HepG2 (cell line): ENCODE measurements at regions of chr17 and their contacts with region 1.

Region 1: DNA sequence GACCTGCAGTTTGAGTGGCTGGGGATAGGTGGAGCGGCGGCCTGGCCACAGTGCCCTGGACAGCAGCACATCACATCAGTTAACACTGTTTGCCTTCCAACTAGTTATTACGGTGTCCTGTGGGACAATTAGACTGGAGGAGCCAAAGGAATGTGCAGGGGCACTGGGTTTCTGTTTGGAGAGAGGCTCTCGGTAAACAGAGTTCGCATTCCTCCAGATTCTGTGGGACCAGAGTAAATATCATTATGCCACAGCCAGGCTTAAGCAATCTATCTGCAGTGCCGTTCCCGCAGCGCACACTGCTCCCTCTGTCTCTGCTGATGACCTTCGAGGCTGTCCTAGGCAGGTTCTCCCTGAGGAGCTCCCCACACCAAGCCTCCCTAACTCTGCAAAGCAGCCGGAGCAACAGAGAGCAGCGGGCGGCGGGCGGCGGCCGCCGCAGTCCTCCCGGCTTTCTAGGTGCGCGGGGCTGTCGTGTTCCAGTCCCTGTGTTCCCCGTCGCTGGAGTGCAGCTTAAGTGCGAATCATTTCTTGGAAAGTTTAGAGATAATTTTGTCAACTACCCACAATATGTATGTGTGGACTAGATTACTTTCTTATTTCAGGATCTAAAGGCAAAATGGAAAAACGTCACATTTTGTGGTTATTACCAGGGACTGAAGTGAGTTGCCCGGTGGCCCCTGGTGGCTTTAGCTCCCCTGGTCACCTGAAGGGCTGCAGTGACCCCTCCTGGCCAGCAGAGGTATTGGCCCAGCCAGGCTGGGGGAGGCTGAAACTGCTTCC is 43.2 kb downstream of the PGS1 start:
- DNase-seq: peak; percentile 100
- ATAC-seq: peak; percentile 96
- H3K4me3 ChIP-seq: peak overlapping the region in 1 of 3 experiments; percentile 50; a peak in 2 of 6 replicates
- H3K27ac ChIP-seq: peak overlapping the region; percentile 56
- H3K4me1 ChIP-seq: peaks cover 29% of the 10 kb centered on the region
- H3K27me3 ChIP-seq: no peaks in the 10 kb centered on the region
- CTCF ChIP-seq: peak; percentile 97
- EP300 ChIP-seq: peak; percentile 98
- POLR2A ChIP-seq: peak in 1 of 2 experiments; percentile 28; a peak in 1 of 4 replicates
- RAD21 ChIP-seq: peak; percentile 97

Region 2: GRCh38 chr17:78250891-78251794 is 170.5 kb before region 1 on chr17:
- CTCF ChIA-PET with region 1: interaction called, 7 read pairs
- POLR2A ChIA-PET with region 1: interaction called, 5 read pairs
- in situ Hi-C with region 1: no loop called
- intact Hi-C with region 1: loop called (anchors 5 kb)
- DNase-seq: peak; percentile 79
- ATAC-seq: peak; percentile 80
- H3K4me3 ChIP-seq: peak overlapping the region in 1 of 3 experiments; percentile 3; a peak in 1 of 6 replicates
- H3K27ac ChIP-seq: no peak overlapping the region
- H3K4me1 ChIP-seq: peaks cover 71% of the 10 kb centered on the region
- H3K27me3 ChIP-seq: peaks cover 0 to 17% of the 10 kb centered on the region in 2 experiments; a peak in 4 of 5 replicates
- CTCF ChIP-seq: peak; percentile 99
- EP300 ChIP-seq: no peak
- POLR2A ChIP-seq: no peak
- RAD21 ChIP-seq: peak; percentile 100

Region 3: GRCh38 chr17:78289802-78290363 is 131.8 kb before region 1 on chr17:
- CTCF ChIA-PET with region 1: interaction called, 28 read pairs
- POLR2A ChIA-PET with region 1: interaction called, 3 read pairs
- in situ Hi-C with region 1: loop called (anchors 5 kb)
- intact Hi-C with region 1: loop called (anchors 1 kb)
- DNase-seq: peak; percentile 71
- ATAC-seq: peak; percentile 88
- H3K4me3 ChIP-seq: no peak overlapping the region
- H3K27ac ChIP-seq: no peak overlapping the region
- H3K4me1 ChIP-seq: peaks cover 20% of the 10 kb centered on the region
- H3K27me3 ChIP-seq: peaks cover 6 to 41% of the 10 kb centered on the region in 2 experiments
- CTCF ChIP-seq: peak; percentile 95
- EP300 ChIP-seq: no peak
- POLR2A ChIP-seq: no peak
- RAD21 ChIP-seq: peak; percentile 64; the same call in 1 of the 2 replicates

Region 4: DNA sequence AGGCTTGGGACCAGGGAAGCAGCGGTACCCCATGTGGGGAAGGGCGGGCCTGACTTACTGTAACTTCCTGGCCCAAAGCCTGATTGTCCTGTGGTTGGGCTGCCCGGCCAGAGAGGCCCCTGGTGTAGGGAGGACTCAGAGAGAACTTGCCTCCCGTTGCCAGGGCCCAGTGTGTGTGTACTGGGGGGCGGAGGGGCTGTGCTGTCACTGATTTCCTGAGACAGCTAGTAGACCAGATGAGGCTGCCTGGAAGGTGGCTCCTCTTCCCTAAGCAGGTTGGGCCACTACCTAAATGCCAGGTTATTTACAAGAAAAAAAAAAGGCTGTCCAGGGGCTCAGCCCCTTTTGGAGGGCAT is 78.5 kb before region 1 on chr17:
- CTCF ChIA-PET with region 1: no interaction called
- POLR2A ChIA-PET with region 1: no interaction called
- in situ Hi-C with region 1: no loop called
- intact Hi-C with region 1: no loop called
- DNase-seq: no peak
- ATAC-seq: no peak; the same call in 2 of the 3 replicates
- H3K4me3 ChIP-seq: no peak overlapping the region
- H3K27ac ChIP-seq: no peak overlapping the region
- H3K4me1 ChIP-seq: peaks cover 18% of the 10 kb centered on the region
- H3K27me3 ChIP-seq: peaks cover 39 to 89% of the 10 kb centered on the region in 2 experiments
- CTCF ChIP-seq: no peak
- EP300 ChIP-seq: no peak
- POLR2A ChIP-seq: no peak
- RAD21 ChIP-seq: no peak

Region 5: GRCh38 chr17:78360371-78361224 is 61.1 kb before region 1 on chr17:
- CTCF ChIA-PET with region 1: interaction called, 59 read pairs
- POLR2A ChIA-PET with region 1: interaction called, 40 read pairs
- in situ Hi-C with region 1: loop called (anchors 5 kb)
- intact Hi-C with region 1: loop called (anchors 1 kb)
- DNase-seq: peak; percentile 80
- ATAC-seq: peak; percentile 86
- H3K4me3 ChIP-seq: peak overlapping the region; percentile 57 to 87 (median 61)
- H3K27ac ChIP-seq: no peak overlapping the region
- H3K4me1 ChIP-seq: peaks cover 52% of the 10 kb centered on the region
- H3K27me3 ChIP-seq: peaks cover 10 to 67% of the 10 kb centered on the region in 2 experiments; a peak in 4 of 5 replicates
- CTCF ChIP-seq: peak; percentile 100
- EP300 ChIP-seq: no peak
- POLR2A ChIP-seq: no peak
- RAD21 ChIP-seq: peak; percentile 96

Region 6: DNA sequence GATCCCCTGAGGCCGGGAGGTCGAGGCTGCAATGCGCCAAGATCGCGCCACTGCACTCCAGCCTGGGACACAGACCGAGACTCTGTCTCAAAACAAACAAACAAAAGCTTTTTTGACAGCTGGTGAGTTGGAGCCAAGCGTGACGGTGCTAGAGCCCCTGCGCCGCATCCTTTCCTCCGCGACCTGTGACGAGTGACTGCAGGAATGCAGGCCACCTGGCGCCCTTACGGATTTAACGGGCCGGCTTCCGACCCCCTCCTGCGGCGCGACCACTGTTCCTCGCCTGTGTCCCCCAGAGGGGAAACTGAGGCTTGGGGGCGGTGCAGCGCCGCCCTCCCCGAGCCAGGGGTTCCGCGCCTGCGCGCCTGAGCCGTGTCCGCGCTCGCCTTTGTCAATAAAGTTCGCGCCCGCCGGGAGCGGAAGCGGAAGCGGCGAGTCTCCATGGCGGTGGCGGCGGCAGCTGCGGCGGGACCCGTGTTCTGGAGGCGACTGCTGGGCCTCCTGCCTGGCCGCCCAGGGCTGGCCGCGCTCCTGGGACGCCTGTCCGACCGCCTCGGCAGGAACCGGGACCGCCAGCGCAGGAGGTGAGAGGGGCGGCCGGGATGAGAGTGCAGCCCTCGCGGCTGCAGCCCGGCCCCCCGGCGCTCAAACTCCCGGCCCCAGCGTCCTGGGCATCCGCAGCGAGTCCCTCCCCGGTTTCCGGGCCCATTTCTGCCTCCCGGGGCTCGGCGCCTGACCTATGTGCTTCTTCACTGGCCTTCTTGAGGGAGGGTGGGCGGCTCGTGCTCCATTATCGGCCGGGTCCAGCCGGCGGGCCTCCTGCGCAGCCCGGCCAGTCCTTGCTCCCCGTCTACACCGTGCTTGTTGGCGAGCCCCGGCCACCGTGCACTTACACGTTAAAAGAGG is 43.2 kb before region 1 on chr17 and contains the start of gene PGS1:
- CTCF ChIA-PET with region 1: interaction called, 5 read pairs
- POLR2A ChIA-PET with region 1: interaction called, 12 read pairs
- in situ Hi-C with region 1: no loop called
- intact Hi-C with region 1: loop called (anchors 5 kb)
- DNase-seq: no peak
- ATAC-seq: peak; percentile 72
- H3K4me3 ChIP-seq: peak within 1 kb of the TSS; percentile 97 to 98 (median 97)
- H3K27ac ChIP-seq: peak within 1 kb of the TSS; percentile 80
- H3K4me1 ChIP-seq: peaks cover 78% of the 10 kb centered on the region
- H3K27me3 ChIP-seq: peaks cover 2 to 8% of the 10 kb centered on the region in 2 experiments; a peak in 1 of 5 replicates
- CTCF ChIP-seq: peak; percentile 40
- EP300 ChIP-seq: peak; percentile 15 to 72; a peak in 2 of 4 replicates
- POLR2A ChIP-seq: peak in 1 of 2 experiments; percentile 77; a peak in 2 of 4 replicates
- RAD21 ChIP-seq: peak; percentile 64; the same call in 1 of the 2 replicates
- total RNA-seq, gene PGS1: 18.8 and 25.9 TPM in 2 replicates

Region 7: DNA sequence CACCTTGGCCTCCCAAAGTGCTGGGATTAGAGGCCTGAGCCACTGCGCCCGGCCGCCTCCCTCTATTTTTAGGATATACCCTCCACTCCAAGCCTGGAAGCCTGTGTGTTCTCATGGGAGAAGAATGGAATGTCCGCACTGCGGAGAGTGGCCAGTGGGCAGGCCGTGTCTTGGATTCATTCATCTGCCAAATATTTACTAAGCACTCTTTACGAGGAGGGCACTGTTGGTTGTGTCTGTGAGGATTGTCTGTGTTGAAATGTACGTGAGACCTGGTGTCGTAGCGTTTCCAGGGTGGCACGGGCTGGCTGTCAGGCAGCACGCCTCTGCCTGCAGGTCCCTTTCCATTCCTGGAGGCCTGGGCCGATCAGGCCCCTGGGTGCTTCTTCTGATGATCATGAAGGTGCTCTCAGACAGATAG is 24.0 kb before region 1 on chr17:
- CTCF ChIA-PET with region 1: no interaction called
- POLR2A ChIA-PET with region 1: interaction called, 6 read pairs
- in situ Hi-C with region 1: no loop called
- intact Hi-C with region 1: loop called (anchors 1 kb)
- DNase-seq: no peak
- ATAC-seq: no peak
- H3K4me3 ChIP-seq: no peak overlapping the region
- H3K27ac ChIP-seq: no peak overlapping the region
- H3K4me1 ChIP-seq: peaks cover 53% of the 10 kb centered on the region
- H3K27me3 ChIP-seq: no peaks in the 10 kb centered on the region
- CTCF ChIP-seq: no peak
- EP300 ChIP-seq: no peak
- POLR2A ChIP-seq: no peak
- RAD21 ChIP-seq: no peak

Region 8: GRCh38 chr17:78432226-78433012 is 10.7 kb after region 1 on chr17:
- CTCF ChIA-PET with region 1: no interaction called
- POLR2A ChIA-PET with region 1: interaction called, 12 read pairs
- in situ Hi-C with region 1: no loop called
- intact Hi-C with region 1: no loop called
- DNase-seq: no peak
- ATAC-seq: peak; percentile 19
- H3K4me3 ChIP-seq: peak overlapping the region in 1 of 3 experiments; percentile 39; a peak in 1 of 6 replicates
- H3K27ac ChIP-seq: peak overlapping the region; percentile 9
- H3K4me1 ChIP-seq: peaks cover 32% of the 10 kb centered on the region
- H3K27me3 ChIP-seq: peaks cover 0 to 8% of the 10 kb centered on the region in 2 experiments; a peak in 3 of 5 replicates
- CTCF ChIP-seq: no peak
- EP300 ChIP-seq: no peak
- POLR2A ChIP-seq: no peak
- RAD21 ChIP-seq: no peak